Endothelial cell of umbilical vein (primary cell): ENCODE measurements at regions of chr2 and their contacts with region 1.

Region 1: GRCh38 chr2:134782792-134783191 is 55.6 kb upstream of the ACMSD start:
- DNase-seq: peak; percentile 26
- H3K4me3 ChIP-seq: no peak overlapping the region
- H3K27ac ChIP-seq: no peak overlapping the region
- H3K4me1 ChIP-seq: no peaks in the 10 kb centered on the region
- H3K27me3 ChIP-seq: no peaks in the 10 kb centered on the region
- CTCF ChIP-seq: peak; percentile 38 to 48
- POLR2A ChIP-seq: no peak

Region 2: DNA sequence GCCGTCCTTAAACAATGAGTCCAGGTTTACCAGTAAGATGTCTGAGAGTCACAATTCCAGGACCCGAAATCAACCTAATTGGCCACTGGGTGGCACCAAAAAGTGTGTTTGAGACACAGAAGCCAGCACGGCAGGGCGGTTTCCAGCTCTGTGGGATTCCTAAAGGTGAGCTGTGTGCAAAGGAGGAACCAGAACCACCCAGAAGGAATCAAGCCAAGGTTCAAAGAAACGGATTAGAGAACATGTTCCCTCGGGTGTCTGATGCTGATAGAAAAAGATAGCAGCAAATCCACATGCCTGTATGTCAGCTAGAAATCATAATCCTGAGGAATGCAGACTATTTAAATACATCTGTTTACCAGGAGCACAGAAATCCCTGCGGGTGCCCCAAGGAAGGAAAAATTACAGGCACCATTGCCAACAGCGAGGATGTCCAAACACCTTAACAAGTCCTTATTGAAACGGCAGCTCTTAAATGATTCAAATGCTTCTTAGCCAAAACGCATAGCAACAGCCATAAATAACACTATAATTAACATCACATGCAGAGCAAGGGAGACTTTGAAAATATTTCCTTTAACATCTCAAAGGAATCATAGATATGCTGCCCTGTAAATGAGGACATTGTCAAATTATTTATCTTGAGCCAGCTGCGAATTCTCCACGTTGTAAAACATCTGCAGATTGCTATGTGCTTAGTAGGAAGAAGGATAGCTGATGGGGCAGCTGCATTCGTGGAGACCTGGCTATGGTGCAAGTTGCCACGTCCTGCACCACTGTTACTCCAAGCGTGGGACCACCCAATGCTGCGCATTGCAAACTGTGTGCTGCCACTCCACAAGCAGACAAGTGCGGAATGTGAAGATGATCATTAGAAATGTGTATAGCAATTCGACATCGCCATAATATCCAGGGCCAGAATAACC is 895.8 kb before region 1 on chr2:
- CTCF ChIA-PET with region 1: no interaction called
- POLR2A ChIA-PET with region 1: no interaction called
- dilution Hi-C with region 1: no loop called
- intact Hi-C with region 1: loop called (anchors 10 kb)
- DNase-seq: peak; percentile 61
- H3K4me3 ChIP-seq: no peak overlapping the region
- H3K27ac ChIP-seq: no peak overlapping the region
- H3K4me1 ChIP-seq: peaks cover 6% of the 10 kb centered on the region
- H3K27me3 ChIP-seq: peaks cover 0 to 26% of the 10 kb centered on the region in 2 experiments
- CTCF ChIP-seq: peak; percentile 60 to 65
- POLR2A ChIP-seq: no peak

Region 3: DNA sequence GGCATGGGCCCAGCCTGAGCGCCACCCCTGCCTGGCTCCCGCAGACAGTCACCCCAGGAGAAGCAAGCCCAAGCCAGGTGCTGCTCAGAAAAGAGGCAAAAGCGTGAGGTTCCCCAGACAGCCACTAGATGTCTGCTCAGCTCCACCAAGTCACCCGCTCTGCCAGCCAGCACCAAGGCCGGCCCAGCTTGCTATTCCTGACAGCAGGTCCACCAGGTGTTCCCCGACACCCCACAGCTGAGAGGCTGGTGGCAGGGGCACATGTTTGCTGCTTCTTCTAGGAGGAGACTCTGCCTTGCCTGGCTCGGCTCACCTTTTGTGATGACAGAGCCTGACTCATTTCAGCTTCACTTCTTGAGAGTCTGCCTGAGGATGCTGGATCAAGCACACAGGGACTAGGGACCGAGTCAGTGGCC is 322.2 kb before region 1 on chr2:
- CTCF ChIA-PET with region 1: interaction called, 4 read pairs
- POLR2A ChIA-PET with region 1: no interaction called
- dilution Hi-C with region 1: no loop called
- intact Hi-C with region 1: loop called (anchors 2 kb)
- DNase-seq: peak; percentile 52
- H3K4me3 ChIP-seq: no peak overlapping the region
- H3K27ac ChIP-seq: no peak overlapping the region
- H3K4me1 ChIP-seq: peaks cover 5% of the 10 kb centered on the region
- H3K27me3 ChIP-seq: no peaks in the 10 kb centered on the region
- CTCF ChIP-seq: peak; percentile 50 to 86
- POLR2A ChIP-seq: no peak

Region 4: GRCh38 chr2:134657637-134658250 is 125.0 kb before region 1 on chr2:
- CTCF ChIA-PET with region 1: interaction called, 3 read pairs
- POLR2A ChIA-PET with region 1: no interaction called
- dilution Hi-C with region 1: no loop called
- intact Hi-C with region 1: loop called (anchors 1 kb)
- DNase-seq: peak; percentile 22
- H3K4me3 ChIP-seq: no peak overlapping the region
- H3K27ac ChIP-seq: no peak overlapping the region
- H3K4me1 ChIP-seq: no peaks in the 10 kb centered on the region
- H3K27me3 ChIP-seq: peaks cover 0 to 3% of the 10 kb centered on the region in 2 experiments
- CTCF ChIP-seq: peak; percentile 54 to 59
- POLR2A ChIP-seq: no peak

Region 5: GRCh38 chr2:134762508-134762907 is 20.3 kb before region 1 on chr2:
- CTCF ChIA-PET with region 1: interaction called, 13 read pairs
- POLR2A ChIA-PET with region 1: no interaction called
- dilution Hi-C with region 1: no loop called
- intact Hi-C with region 1: no loop called
- DNase-seq: no peak
- H3K4me3 ChIP-seq: no peak overlapping the region
- H3K27ac ChIP-seq: no peak overlapping the region
- H3K4me1 ChIP-seq: no peaks in the 10 kb centered on the region
- H3K27me3 ChIP-seq: no peaks in the 10 kb centered on the region
- CTCF ChIP-seq: no peak
- POLR2A ChIP-seq: no peak

Region 6: GRCh38 chr2:134772493-134773169 is 10.2 kb before region 1 on chr2:
- CTCF ChIA-PET with region 1: no interaction called
- POLR2A ChIA-PET with region 1: no interaction called
- dilution Hi-C with region 1: no loop called
- intact Hi-C with region 1: no loop called
- DNase-seq: no peak
- H3K4me3 ChIP-seq: no peak overlapping the region
- H3K27ac ChIP-seq: no peak overlapping the region
- H3K4me1 ChIP-seq: peaks cover 12% of the 10 kb centered on the region
- H3K27me3 ChIP-seq: peaks cover 0 to 2% of the 10 kb centered on the region in 2 experiments
- CTCF ChIP-seq: no peak
- POLR2A ChIP-seq: no peak

Region 7: GRCh38 chr2:134897932-134898331 is 115.1 kb after region 1 on chr2:
- CTCF ChIA-PET with region 1: interaction called, 6 read pairs
- POLR2A ChIA-PET with region 1: no interaction called
- dilution Hi-C with region 1: no loop called
- intact Hi-C with region 1: loop called (anchors 1 kb)
- DNase-seq: peak; percentile 20
- H3K4me3 ChIP-seq: no peak overlapping the region
- H3K27ac ChIP-seq: no peak overlapping the region
- H3K4me1 ChIP-seq: no peaks in the 10 kb centered on the region
- H3K27me3 ChIP-seq: no peaks in the 10 kb centered on the region
- CTCF ChIP-seq: peak in 1 of 2 donors; percentile 6
- POLR2A ChIP-seq: no peak